ENCODE measurements at regions of chr22 and their contacts with region 1.

Region 1: GRCh38 chr22:18001040-18001893 is 23.1 kb downstream of the MICAL3 start:
- DNase-seq: peak; percentile 91 to 95
- H3K4me3 ChIP-seq: peak overlapping the region; percentile 69
- H3K4me3 Mint-ChIP-seq: peak overlapping the region; percentile 82
- H3K27ac Mint-ChIP-seq: peak overlapping the region; percentile 98
- H3K4me1 ChIP-seq: peaks cover 3% of the 10 kb centered on the region; the same call in 1 of the 2 replicates
- H3K4me1 Mint-ChIP-seq: peaks cover 10% of the 10 kb centered on the region
- H3K27me3 ChIP-seq: no peaks in the 10 kb centered on the region
- H3K27me3 Mint-ChIP-seq: no peaks in the 10 kb centered on the region
- CTCF ChIP-seq: peak; percentile 22 to 40

Region 2: DNA sequence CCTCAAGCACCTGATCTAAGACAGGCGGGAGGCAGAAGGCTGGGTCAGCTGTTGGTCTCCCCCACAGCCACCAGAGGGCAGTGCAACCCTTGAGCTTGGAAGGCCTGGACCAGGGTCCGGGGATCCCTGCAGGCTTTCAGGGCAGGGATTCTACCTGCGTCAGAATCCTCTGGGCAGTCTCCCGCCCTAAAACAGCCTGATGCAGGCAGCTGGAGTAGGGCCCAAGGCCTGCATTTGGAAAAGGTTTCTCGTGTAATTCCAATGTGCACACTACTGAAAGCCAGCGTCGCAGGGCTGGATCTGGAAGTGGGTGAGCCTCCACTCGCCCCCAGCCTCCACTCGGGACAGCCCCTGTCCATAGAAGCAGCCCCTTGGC is 258.8 kb before region 1 on chr22:
- CTCF ChIA-PET with region 1: no interaction called
- POLR2A ChIA-PET with region 1: no interaction called
- intact Hi-C with region 1: loop called (anchors 10 kb)
- DNase-seq: peak; percentile 80 to 85
- H3K4me3 ChIP-seq: no peak overlapping the region
- H3K4me3 Mint-ChIP-seq: no peak overlapping the region
- H3K27ac Mint-ChIP-seq: no peak overlapping the region
- H3K4me1 ChIP-seq: no peaks in the 10 kb centered on the region
- H3K4me1 Mint-ChIP-seq: no peaks in the 10 kb centered on the region
- H3K27me3 ChIP-seq: no peaks in the 10 kb centered on the region
- H3K27me3 Mint-ChIP-seq: no peaks in the 10 kb centered on the region
- CTCF ChIP-seq: peak; percentile 82 to 94

Region 3: DNA sequence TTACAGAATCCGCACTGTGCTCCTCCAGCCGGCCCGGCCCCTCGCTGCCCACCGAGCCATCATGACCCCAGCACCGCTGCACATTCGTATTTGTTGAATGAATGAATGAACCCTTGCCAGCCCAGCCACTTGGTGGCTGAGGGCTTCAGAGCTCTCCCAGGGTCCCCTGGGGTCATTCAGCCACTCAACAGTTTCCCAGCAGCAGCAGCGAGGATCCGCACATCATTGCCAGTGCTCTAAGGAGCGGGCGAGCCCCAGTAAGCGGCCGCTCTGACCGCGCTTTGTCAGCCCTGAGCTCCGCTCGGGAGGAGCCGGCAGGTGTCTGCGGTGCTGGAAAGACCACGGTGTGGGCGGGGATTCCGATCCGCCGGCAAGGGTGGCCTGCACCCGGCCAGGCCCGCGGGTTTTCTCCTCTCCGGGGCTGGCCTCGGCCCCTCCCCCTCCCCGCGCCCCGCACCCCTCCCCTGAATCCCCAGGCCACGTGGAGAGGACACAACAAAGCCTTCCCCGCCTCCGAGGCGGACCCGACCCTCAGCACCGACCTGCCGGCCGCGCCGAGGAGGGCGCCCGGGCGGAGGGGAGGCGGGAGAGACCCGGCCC is 227.6 kb before region 1 on chr22:
- CTCF ChIA-PET with region 1: no interaction called
- POLR2A ChIA-PET with region 1: no interaction called
- intact Hi-C with region 1: no loop called
- DNase-seq: peak; percentile 65 to 67
- H3K4me3 ChIP-seq: peak overlapping the region; percentile 60
- H3K4me3 Mint-ChIP-seq: peak overlapping the region; percentile 75
- H3K27ac Mint-ChIP-seq: no peak overlapping the region
- H3K4me1 ChIP-seq: peaks cover 9% of the 10 kb centered on the region; the same call in 1 of the 2 replicates
- H3K4me1 Mint-ChIP-seq: peaks cover 6% of the 10 kb centered on the region
- H3K27me3 ChIP-seq: no peaks in the 10 kb centered on the region
- H3K27me3 Mint-ChIP-seq: no peaks in the 10 kb centered on the region
- CTCF ChIP-seq: no peak

Region 4: GRCh38 chr22:17842386-17842785 is 158.9 kb before region 1 on chr22:
- CTCF ChIA-PET with region 1: no interaction called
- POLR2A ChIA-PET with region 1: no interaction called
- intact Hi-C with region 1: no loop called
- DNase-seq: no peak
- H3K4me3 ChIP-seq: no peak overlapping the region
- H3K4me3 Mint-ChIP-seq: no peak overlapping the region
- H3K27ac Mint-ChIP-seq: no peak overlapping the region
- H3K4me1 ChIP-seq: peaks cover 7% of the 10 kb centered on the region
- H3K4me1 Mint-ChIP-seq: no peaks in the 10 kb centered on the region
- H3K27me3 ChIP-seq: no peaks in the 10 kb centered on the region
- H3K27me3 Mint-ChIP-seq: no peaks in the 10 kb centered on the region
- CTCF ChIP-seq: no peak

Region 5: GRCh38 chr22:17891481-17892167 is 109.6 kb before region 1 on chr22:
- CTCF ChIA-PET with region 1: no interaction called
- POLR2A ChIA-PET with region 1: no interaction called
- intact Hi-C with region 1: loop called (anchors 10 kb)
- DNase-seq: peak; percentile 54 to 57
- H3K4me3 ChIP-seq: no peak overlapping the region
- H3K4me3 Mint-ChIP-seq: no peak overlapping the region
- H3K27ac Mint-ChIP-seq: peak overlapping the region; percentile 88
- H3K4me1 ChIP-seq: peaks cover 39% of the 10 kb centered on the region
- H3K4me1 Mint-ChIP-seq: peaks cover 42% of the 10 kb centered on the region
- H3K27me3 ChIP-seq: no peaks in the 10 kb centered on the region
- H3K27me3 Mint-ChIP-seq: no peaks in the 10 kb centered on the region
- CTCF ChIP-seq: peak in 1 of 2 experiments; percentile 66

Region 6: GRCh38 chr22:17920145-17920605 is 81.1 kb before region 1 on chr22:
- CTCF ChIA-PET with region 1: interaction called, 4 read pairs
- POLR2A ChIA-PET with region 1: no interaction called
- intact Hi-C with region 1: loop called (anchors 1 kb)
- DNase-seq: peak; percentile 77 to 89
- H3K4me3 ChIP-seq: peak overlapping the region; percentile 19
- H3K4me3 Mint-ChIP-seq: peak overlapping the region; percentile 65
- H3K27ac Mint-ChIP-seq: peak overlapping the region; percentile 74
- H3K4me1 ChIP-seq: peaks cover 49% of the 10 kb centered on the region
- H3K4me1 Mint-ChIP-seq: peaks cover 30% of the 10 kb centered on the region
- H3K27me3 ChIP-seq: no peaks in the 10 kb centered on the region
- H3K27me3 Mint-ChIP-seq: no peaks in the 10 kb centered on the region
- CTCF ChIP-seq: peak in 1 of 2 experiments; percentile 32

Region 7: GRCh38 chr22:17972385-17973181 is 28.7 kb before region 1 on chr22:
- CTCF ChIA-PET with region 1: no interaction called
- POLR2A ChIA-PET with region 1: no interaction called
- intact Hi-C with region 1: loop called (anchors 2 kb)
- DNase-seq: peak; percentile 51 to 59
- H3K4me3 ChIP-seq: no peak overlapping the region
- H3K4me3 Mint-ChIP-seq: peak overlapping the region; percentile 76
- H3K27ac Mint-ChIP-seq: peak overlapping the region; percentile 99
- H3K4me1 ChIP-seq: peaks cover 51% of the 10 kb centered on the region
- H3K4me1 Mint-ChIP-seq: peaks cover 45% of the 10 kb centered on the region
- H3K27me3 ChIP-seq: no peaks in the 10 kb centered on the region
- H3K27me3 Mint-ChIP-seq: no peaks in the 10 kb centered on the region
- CTCF ChIP-seq: no peak

Region 8: DNA sequence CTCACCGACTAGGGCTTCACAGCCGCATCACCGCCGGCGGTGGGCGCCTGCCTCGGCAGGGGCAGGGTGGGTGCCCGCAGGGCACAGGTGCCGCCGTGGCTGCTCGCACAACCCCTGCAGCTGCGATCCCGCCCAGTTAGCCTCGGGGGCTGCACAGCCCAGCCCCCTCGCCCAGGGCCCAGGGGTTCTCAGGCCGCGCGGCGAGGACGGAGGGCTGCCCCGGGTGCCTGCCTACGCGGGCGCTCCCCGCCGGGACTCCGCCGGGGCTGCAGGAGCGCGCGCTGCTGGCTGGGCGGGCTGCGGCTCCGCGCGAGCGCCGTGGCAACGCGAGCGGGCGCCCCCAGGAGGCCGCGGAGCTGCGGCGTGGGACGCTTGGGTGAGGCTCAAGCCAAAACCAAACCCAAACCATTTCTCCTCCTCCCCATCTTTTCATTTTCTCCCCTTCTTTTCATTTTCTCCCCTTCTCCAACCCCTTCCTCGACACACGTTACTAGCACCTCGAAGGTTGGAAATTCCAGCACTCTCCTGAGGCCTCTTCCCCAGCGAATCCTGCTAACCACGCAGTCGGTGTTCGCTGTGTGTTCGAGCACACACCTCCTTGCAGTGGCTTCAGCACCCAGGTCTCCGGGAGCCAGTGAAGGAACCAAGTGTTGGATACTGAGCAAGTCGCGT is 23.1 kb after region 1 on chr22 and contains the start of gene MICAL3:
- CTCF ChIA-PET with region 1: interaction called, 3 read pairs
- POLR2A ChIA-PET with region 1: no interaction called
- intact Hi-C with region 1: loop called (anchors 1 kb)
- DNase-seq: peak; percentile 44 to 83
- H3K4me3 ChIP-seq: peak within 1 kb of the TSS; percentile 55
- H3K4me3 Mint-ChIP-seq: peak within 1 kb of the TSS; percentile 76
- H3K27ac Mint-ChIP-seq: peak within 1 kb of the TSS; percentile 21
- H3K4me1 ChIP-seq: peaks cover 3% of the 10 kb centered on the region; the same call in 1 of the 2 replicates
- H3K4me1 Mint-ChIP-seq: peaks cover 6% of the 10 kb centered on the region
- H3K27me3 ChIP-seq: no peaks in the 10 kb centered on the region
- H3K27me3 Mint-ChIP-seq: peaks cover 2% of the 10 kb centered on the region
- CTCF ChIP-seq: peak; percentile 39 to 67
- total RNA-seq, gene MICAL3: 65.6 and 74.0 TPM in 2 replicates

Region 9: GRCh38 chr22:18068381-18068988 is 67.2 kb after region 1 on chr22:
- CTCF ChIA-PET with region 1: no interaction called
- POLR2A ChIA-PET with region 1: no interaction called
- intact Hi-C with region 1: loop called (anchors 2 kb)
- DNase-seq: no peak
- H3K4me3 ChIP-seq: no peak overlapping the region
- H3K4me3 Mint-ChIP-seq: no peak overlapping the region
- H3K27ac Mint-ChIP-seq: peak overlapping the region; percentile 69
- H3K4me1 ChIP-seq: peaks cover 42% of the 10 kb centered on the region
- H3K4me1 Mint-ChIP-seq: peaks cover 42% of the 10 kb centered on the region
- H3K27me3 ChIP-seq: no peaks in the 10 kb centered on the region
- H3K27me3 Mint-ChIP-seq: no peaks in the 10 kb centered on the region
- CTCF ChIP-seq: no peak

Measured in Caco-2 (cell line).